IMR-90 (cell line): ENCODE measurements at regions of chr9 and their contacts with region 1.

Region 1: DNA sequence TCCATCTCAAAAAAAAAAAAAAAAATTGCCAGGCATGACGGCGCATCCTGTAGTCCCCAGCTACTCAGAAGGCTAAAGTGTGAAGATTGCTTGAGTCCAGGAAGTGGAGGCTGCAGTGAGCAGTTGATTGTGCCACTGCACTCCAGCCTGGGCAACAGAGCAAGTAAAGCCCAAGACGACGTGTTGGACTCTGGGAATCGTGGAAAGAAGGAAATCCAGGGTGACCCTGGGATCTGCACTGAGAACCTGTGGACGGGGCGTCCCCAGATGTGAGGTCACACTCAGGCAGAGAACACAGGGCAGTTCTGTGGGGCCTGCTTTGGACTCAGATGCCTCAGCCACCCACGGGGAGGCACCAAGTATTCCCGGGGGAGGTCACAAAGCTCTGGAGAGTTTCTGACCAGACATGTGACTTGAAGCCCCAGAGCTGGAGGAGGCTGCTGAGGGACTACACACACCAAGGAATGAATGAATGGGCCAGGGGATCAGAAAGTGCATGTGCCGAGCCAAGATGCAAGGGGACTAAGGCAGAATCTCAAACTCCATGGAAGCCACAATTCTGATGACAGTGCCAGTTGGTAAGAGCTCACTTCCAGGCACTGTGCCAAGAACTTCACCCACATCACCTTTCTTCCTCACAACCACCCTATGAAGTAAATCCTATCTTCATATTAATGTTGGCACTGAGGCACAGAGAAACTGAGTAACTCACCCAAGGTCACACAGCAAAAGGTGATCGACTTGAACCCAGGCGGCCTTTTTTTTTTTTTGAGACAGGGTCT is 12.9 kb downstream of the DYNC2I2 start:
- DNase-seq: no peak
- ATAC-seq: peak; percentile 15; the same call in 1 of the 2 replicates
- H3K4me3 ChIP-seq: no peak overlapping the region
- H3K27ac ChIP-seq: no peak overlapping the region
- H3K4me1 ChIP-seq: peaks cover 4% of the 10 kb centered on the region
- H3K27me3 ChIP-seq: no peaks in the 10 kb centered on the region
- CTCF ChIP-seq: no peak
- POLR2A ChIP-seq: no peak
- RAD21 ChIP-seq: no peak

Region 2: DNA sequence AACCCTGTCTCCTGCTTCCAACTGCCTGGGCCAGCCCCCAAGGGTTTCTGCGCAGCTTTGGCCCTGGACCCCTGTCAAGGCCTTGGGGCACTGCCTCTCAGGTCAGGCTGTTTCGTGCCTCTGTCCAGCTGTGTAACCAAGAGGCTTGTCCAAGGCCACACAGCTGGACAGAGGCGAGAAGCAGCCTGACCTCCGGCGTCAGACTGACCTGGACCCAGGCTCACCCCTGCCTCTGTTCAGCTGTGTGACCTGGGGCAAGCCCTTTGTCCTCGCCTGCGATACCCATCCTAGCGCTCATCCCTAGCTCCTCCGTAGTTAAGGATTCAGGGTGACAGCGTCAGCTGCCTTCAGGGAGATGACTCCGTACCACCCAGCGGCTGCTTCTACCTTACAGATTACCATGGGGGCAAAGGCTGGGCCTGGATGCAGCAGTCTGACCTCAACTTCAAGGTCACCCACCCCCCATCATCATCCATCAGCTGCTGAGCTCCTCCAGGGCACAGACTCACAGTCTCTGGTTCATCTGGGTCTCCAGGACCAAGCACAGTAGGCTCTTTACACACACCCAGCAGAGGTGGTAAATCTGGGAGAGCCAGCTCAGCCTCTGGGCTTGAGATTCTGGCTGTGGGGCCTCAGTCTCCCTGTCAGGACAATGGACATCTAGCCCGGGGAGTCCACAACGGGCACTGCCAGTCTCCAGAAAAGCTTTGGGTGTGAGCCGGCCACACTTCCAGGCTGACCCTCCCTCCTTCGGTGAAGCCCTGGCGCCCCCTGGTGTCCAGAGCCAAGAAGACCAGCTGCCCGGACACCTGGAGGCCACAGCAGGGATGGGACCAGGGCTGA is 774.2 kb before region 1 on chr9:
- CTCF ChIA-PET with region 1: no interaction called
- POLR2A ChIA-PET with region 1: no interaction called
- dilution Hi-C with region 1: no loop called
- in situ Hi-C with region 1: no loop called
- intact Hi-C with region 1: no loop called
- DNase-seq: peak; percentile 67
- ATAC-seq: peak; percentile 96
- H3K4me3 ChIP-seq: no peak overlapping the region
- H3K27ac ChIP-seq: no peak overlapping the region
- H3K4me1 ChIP-seq: no peaks in the 10 kb centered on the region
- H3K27me3 ChIP-seq: no peaks in the 10 kb centered on the region
- CTCF ChIP-seq: peak; percentile 97
- POLR2A ChIP-seq: 0 out of 2 replicates have a peak, but pooled peaks have one; percentile 50
- RAD21 ChIP-seq: peak; percentile 97

Region 3: GRCh38 chr9:128523199-128523925 is 120.3 kb before region 1 on chr9:
- CTCF ChIA-PET with region 1: no interaction called
- POLR2A ChIA-PET with region 1: no interaction called
- dilution Hi-C with region 1: no loop called
- in situ Hi-C with region 1: no loop called
- intact Hi-C with region 1: no loop called
- DNase-seq: peak; percentile 67
- ATAC-seq: peak; percentile 90
- H3K4me3 ChIP-seq: no peak overlapping the region
- H3K27ac ChIP-seq: no peak overlapping the region
- H3K4me1 ChIP-seq: peaks cover 7% of the 10 kb centered on the region; the same call in 1 of the 2 replicates
- H3K27me3 ChIP-seq: no peaks in the 10 kb centered on the region
- CTCF ChIP-seq: no peak
- POLR2A ChIP-seq: no peak
- RAD21 ChIP-seq: no peak

Region 4: GRCh38 chr9:128628471-128629048 is 15.2 kb before region 1 on chr9:
- CTCF ChIA-PET with region 1: no interaction called
- POLR2A ChIA-PET with region 1: interaction called, 10 read pairs
- dilution Hi-C with region 1: no loop called
- in situ Hi-C with region 1: no loop called
- intact Hi-C with region 1: no loop called
- DNase-seq: no peak
- ATAC-seq: 0 out of 2 replicates have a peak, but pooled peaks have one; percentile 19
- H3K4me3 ChIP-seq: no peak overlapping the region
- H3K27ac ChIP-seq: no peak overlapping the region
- H3K4me1 ChIP-seq: no peaks in the 10 kb centered on the region
- H3K27me3 ChIP-seq: no peaks in the 10 kb centered on the region
- CTCF ChIP-seq: no peak
- POLR2A ChIP-seq: no peak
- RAD21 ChIP-seq: no peak